GM12878 (cell line): ENCODE measurements at regions of chr7 and their contacts with region 1.

Region 1: GRCh38 chr7:116152276-116152675 is 58.1 kb upstream of the TES start:
- DNase-seq: no peak
- ATAC-seq: peak; percentile 35; the same call in 1 of the 3 replicates
- H3K4me3 ChIP-seq: no peak overlapping the region; the same call in 1 of the 2 replicates
- H3K27ac ChIP-seq: no peak overlapping the region
- H3K4me1 ChIP-seq: peaks cover 21% of the 10 kb centered on the region
- H3K27me3 ChIP-seq: no peaks in the 10 kb centered on the region; a peak in 1 of 4 replicates
- CTCF ChIP-seq: no peak
- EP300 ChIP-seq: no peak
- POLR2A ChIP-seq: no peak
- RAD21 ChIP-seq: no peak

Region 2: DNA sequence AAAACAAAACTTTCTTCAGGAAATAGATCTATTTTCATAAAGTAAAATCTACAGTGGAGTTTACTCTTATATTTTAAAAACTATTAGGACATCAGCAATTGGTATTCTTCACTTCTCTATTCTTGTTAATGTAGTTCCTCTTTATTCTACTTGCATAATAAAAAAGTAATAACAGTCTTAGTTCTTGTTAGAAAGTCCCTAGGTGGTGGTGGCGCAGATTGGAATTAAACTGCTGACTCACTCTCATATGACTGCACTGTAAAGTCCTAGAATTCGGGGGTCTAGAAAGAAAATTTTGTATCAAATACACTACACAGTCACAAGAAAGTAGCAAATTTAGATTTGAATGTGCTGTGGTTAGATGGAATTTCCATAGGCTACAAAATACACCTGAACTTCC is 13.4 kb after region 1 on chr7:
- CTCF ChIA-PET with region 1: interaction called, 16 read pairs
- POLR2A ChIA-PET with region 1: interaction called, 4 read pairs
- RAD21 ChIA-PET with region 1: interaction called, 3 read pairs
- SMC1A ChIA-PET with region 1: interaction called, 4 read pairs
- in situ Hi-C with region 1: no loop called
- intact Hi-C with region 1: no loop called
- DNase-seq: no peak
- ATAC-seq: peak; percentile 83
- H3K4me3 ChIP-seq: no peak overlapping the region
- H3K27ac ChIP-seq: peak overlapping the region; percentile 38
- H3K4me1 ChIP-seq: peaks cover 46% of the 10 kb centered on the region
- H3K27me3 ChIP-seq: no peaks in the 10 kb centered on the region
- CTCF ChIP-seq: no peak
- EP300 ChIP-seq: peak; percentile 34 to 71; a peak in 2 of 4 replicates
- POLR2A ChIP-seq: no peak
- RAD21 ChIP-seq: no peak